Activated CD4-positive, alpha-beta T cell treated with anti-CD3 and anti-CD28 coated beads for 36 hours (primary cell): ENCODE measurements at regions of chr9 and their contacts with region 1.

Region 1: DNA sequence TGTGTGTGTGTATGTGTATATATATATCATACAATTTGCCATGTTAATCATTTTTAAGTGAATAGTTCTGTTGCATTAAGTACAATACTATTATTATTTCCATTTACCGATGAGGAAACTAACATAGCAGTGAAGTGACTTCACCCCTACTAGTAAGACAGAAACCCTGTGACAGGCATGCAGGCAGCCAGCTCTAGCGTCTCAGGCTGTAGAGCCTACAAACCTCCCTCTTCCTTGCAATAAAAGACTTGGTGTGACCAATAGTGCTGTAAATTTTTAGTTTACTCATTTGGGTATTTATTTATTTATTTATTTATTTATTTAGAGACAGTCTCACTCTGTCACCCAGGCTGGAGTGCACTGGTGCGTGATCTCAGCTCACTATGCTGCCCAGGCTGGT is 24.7 kb downstream of the FNBP1 start:
- DNase-seq: peak; percentile 61
- ATAC-seq: peak; percentile 27
- H3K4me3 Mint-ChIP-seq: no peak overlapping the region
- H3K27ac Mint-ChIP-seq: peak overlapping the region; percentile 96
- H3K4me1 Mint-ChIP-seq: peaks cover 86% of the 10 kb centered on the region
- H3K27me3 Mint-ChIP-seq: no peaks in the 10 kb centered on the region

Region 2: GRCh38 chr9:129949821-129950220 is 68.4 kb before region 1 on chr9:
- CTCF ChIA-PET with region 1: no interaction called
- POLR2A ChIA-PET with region 1: no interaction called
- intact Hi-C with region 1: no loop called
- DNase-seq: no peak
- ATAC-seq: no peak
- H3K4me3 Mint-ChIP-seq: no peak overlapping the region
- H3K27ac Mint-ChIP-seq: peak overlapping the region; percentile 44
- H3K4me1 Mint-ChIP-seq: peaks cover 53% of the 10 kb centered on the region
- H3K27me3 Mint-ChIP-seq: no peaks in the 10 kb centered on the region

Region 3: DNA sequence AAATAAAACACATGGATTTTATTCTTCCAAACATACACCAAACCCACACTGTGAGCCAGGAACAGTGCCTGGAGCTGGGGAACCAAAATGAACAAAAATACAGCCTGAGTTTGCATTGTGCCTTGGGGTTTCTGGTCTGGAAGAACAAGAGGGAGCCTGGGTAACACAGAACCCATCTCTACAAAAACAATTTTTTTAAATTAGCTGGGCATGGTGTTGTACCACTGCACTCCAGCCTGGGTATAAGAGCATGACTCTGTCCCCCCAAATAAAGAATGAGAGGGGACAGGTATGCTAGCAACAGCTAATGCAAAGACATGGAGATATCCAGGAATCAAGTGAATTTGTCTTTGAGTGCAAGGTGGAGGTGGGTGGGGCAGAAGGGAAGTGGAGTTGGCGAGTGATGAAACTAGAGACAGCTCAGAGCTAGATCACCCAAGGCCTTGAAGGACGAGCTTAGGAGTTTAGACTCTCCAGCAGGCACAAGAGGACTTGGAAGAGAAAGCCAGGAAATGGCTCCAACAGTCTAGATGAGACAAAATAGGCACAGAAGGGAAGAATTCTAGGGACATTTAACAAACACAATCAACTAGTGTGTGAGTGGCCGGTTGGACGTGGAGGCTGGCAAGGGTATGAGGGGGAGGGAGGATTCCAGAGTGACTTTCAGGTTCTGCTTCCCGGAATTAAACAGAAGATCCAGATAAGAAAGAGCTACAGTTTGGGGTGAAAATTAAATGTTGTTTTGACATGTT is 22.7 kb before region 1 on chr9:
- CTCF ChIA-PET with region 1: interaction called, 10 read pairs
- POLR2A ChIA-PET with region 1: interaction called, 11 read pairs
- intact Hi-C with region 1: loop called (anchors 1 to 2 kb)
- DNase-seq: peak; percentile 69
- ATAC-seq: peak; percentile 43
- H3K4me3 Mint-ChIP-seq: peak overlapping the region; percentile 59
- H3K27ac Mint-ChIP-seq: peak overlapping the region; percentile 96
- H3K4me1 Mint-ChIP-seq: peaks cover 88% of the 10 kb centered on the region
- H3K27me3 Mint-ChIP-seq: no peaks in the 10 kb centered on the region

Region 4: GRCh38 chr9:130029223-130029973 is 11.1 kb after region 1 on chr9:
- CTCF ChIA-PET with region 1: interaction called, 17 read pairs
- POLR2A ChIA-PET with region 1: interaction called, 24 read pairs
- intact Hi-C with region 1: loop called (anchors 1 kb)
- DNase-seq: peak; percentile 70
- ATAC-seq: peak; percentile 45
- H3K4me3 Mint-ChIP-seq: peak overlapping the region; percentile 44
- H3K27ac Mint-ChIP-seq: peak overlapping the region; percentile 92
- H3K4me1 Mint-ChIP-seq: peaks cover 98% of the 10 kb centered on the region
- H3K27me3 Mint-ChIP-seq: no peaks in the 10 kb centered on the region

Region 5: DNA sequence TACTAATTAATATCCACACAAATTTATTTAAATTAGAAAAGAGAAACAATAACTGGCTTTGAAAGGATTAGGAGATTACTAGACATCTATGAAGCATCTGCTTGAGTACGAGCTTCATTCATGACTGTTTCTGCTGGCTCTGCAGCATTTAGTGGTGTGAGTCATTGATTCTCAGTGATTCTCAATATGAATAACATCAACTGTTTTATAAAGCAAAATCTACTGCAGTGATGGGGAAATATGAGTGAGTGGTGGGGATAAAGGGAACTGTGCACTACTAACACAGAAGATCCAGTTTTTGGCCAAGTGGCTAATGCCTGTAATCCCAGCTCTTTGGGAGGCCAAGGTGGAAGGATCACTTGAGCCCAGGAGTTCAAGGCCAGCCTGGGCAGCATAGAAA is 16.3 kb after region 1 on chr9:
- CTCF ChIA-PET with region 1: interaction called, 17 read pairs
- POLR2A ChIA-PET with region 1: interaction called, 24 read pairs
- intact Hi-C with region 1: loop called (anchors 1 to 2 kb)
- DNase-seq: peak; percentile 62
- ATAC-seq: peak; percentile 54
- H3K4me3 Mint-ChIP-seq: peak overlapping the region; percentile 61
- H3K27ac Mint-ChIP-seq: peak overlapping the region; percentile 100
- H3K4me1 Mint-ChIP-seq: peaks cover 88% of the 10 kb centered on the region
- H3K27me3 Mint-ChIP-seq: no peaks in the 10 kb centered on the region

Region 6: GRCh38 chr9:130053504-130054324 is 35.5 kb after region 1 on chr9 and contains the start of gene GPR107:
- CTCF ChIA-PET with region 1: interaction called, 3 read pairs
- POLR2A ChIA-PET with region 1: interaction called, 12 read pairs
- intact Hi-C with region 1: no loop called
- DNase-seq: peak; percentile 91
- ATAC-seq: peak; percentile 90
- H3K4me3 Mint-ChIP-seq: peak within 1 kb of the TSS; percentile 94
- H3K27ac Mint-ChIP-seq: peak within 1 kb of the TSS; percentile 86
- H3K4me1 Mint-ChIP-seq: peaks cover 30% of the 10 kb centered on the region
- H3K27me3 Mint-ChIP-seq: no peaks in the 10 kb centered on the region
- total RNA-seq, gene GPR107: 17.7 to 19.7 TPM